B cell (primary cell): ENCODE measurements at regions of chr19 and their contacts with region 1.

Region 1: GRCh38 chr19:8580710-8581281 is 3.6 kb upstream of the MYO1F start:
- DNase-seq: peak; percentile 91
- ATAC-seq: peak; percentile 76
- H3K4me3 ChIP-seq: no peak overlapping the region
- H3K4me3 Mint-ChIP-seq: no peak overlapping the region
- H3K27ac ChIP-seq: no peak overlapping the region
- H3K27ac Mint-ChIP-seq: no peak overlapping the region
- H3K4me1 ChIP-seq: peaks cover 27 to 44% of the 10 kb centered on the region in 2 donors
- H3K4me1 Mint-ChIP-seq: peaks cover 29% of the 10 kb centered on the region
- H3K27me3 ChIP-seq: no peaks in the 10 kb centered on the region
- H3K27me3 Mint-ChIP-seq: no peaks in the 10 kb centered on the region
- CTCF ChIP-seq: peak; percentile 99

Region 2: DNA sequence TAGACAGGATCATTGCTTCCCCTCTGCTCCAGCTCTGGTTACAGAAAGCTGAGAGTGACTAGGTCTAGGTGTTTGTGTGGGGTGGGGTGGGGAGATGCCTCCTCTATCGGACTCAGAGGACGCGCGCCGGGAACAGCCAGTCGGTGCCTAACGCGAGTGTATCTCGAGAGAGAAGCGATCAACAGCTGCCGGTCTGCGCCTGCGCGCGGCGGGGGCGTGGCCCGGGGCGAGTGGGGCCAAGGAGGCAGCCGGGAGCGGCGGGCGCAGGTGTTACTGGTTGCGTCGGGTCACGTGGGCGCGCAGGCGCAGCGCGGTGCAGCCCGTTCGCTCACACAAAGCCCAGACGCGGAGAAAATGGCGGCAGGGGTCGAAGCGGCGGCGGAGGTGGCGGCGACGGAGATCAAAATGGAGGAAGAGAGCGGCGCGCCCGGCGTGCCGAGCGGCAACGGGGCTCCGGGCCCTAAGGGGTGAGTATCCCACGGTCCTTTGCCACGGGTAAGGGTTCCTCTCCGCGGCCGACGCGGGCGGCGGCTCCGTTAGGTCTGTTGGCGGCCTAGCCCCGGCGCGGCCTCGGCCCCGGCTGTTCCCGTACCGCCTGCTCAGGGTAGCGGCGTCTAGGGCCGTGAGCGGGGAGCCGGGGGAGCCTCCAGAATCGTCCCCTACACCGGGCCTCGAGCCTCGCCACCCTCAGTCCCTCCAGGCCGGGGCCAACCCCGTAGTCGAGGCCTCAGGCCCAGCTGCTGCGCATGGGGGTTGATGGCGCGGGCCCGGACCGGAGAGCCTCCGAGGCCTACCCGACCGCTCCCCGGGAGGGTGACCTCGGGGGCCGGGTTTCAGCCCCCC is 135.9 kb before region 1 on chr19 and contains the start of gene HNRNPM:
- CTCF ChIA-PET with region 1: interaction called, 10 read pairs
- POLR2A ChIA-PET with region 1: no interaction called
- intact Hi-C with region 1: no loop called
- DNase-seq: peak; percentile 99
- ATAC-seq: peak; percentile 92
- H3K4me3 ChIP-seq: peak within 1 kb of the TSS; percentile 65 to 97 (median 97)
- H3K4me3 Mint-ChIP-seq: peak within 1 kb of the TSS; percentile 94
- H3K27ac ChIP-seq: peak within 1 kb of the TSS; percentile 89 to 97
- H3K27ac Mint-ChIP-seq: peak within 1 kb of the TSS; percentile 98
- H3K4me1 ChIP-seq: peaks cover 38 to 47% of the 10 kb centered on the region in 2 donors
- H3K4me1 Mint-ChIP-seq: peaks cover 37% of the 10 kb centered on the region
- H3K27me3 ChIP-seq: no peaks in the 10 kb centered on the region
- H3K27me3 Mint-ChIP-seq: no peaks in the 10 kb centered on the region
- CTCF ChIP-seq: no peak
- total RNA-seq, gene HNRNPM: 207 and 221 TPM in 2 replicates

Region 3: DNA sequence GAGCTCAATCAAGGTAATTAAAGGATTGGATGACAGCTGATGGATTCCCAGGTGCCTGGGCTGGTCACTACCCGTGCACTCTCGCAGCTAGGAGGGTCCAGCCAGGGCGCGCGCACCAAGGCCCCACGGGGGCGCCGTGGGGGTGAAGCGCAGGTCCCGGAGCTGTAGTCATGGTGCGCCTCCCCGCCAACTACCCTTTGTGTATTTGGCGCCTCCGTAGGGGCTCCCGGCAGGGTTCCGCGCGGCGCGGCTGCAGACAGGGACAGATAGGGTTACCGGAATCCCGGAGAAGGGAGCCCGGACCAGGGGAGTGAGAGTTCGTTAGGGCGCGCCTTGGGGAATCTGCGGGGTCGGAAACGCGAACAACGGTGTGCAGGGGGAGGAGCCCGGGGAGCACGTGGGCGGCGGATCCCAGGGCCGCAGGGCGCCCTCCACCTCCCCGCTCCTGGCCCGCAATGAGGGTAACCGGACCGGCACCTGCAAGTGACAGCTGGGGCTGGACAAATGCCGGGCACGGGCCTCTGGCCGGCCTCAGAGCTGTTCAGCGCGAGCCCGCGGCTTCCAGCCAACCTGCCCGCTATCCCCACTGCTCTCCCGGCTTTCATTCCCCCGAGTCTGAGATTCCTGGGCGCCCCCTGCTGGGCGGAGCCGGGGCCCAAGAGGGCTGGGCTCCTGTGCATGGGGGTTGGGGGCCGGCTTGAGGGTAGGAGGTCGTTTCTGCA is 75.0 kb before region 1 on chr19:
- CTCF ChIA-PET with region 1: interaction called, 38 read pairs
- POLR2A ChIA-PET with region 1: interaction called, 3 read pairs
- intact Hi-C with region 1: no loop called
- DNase-seq: peak; percentile 82
- ATAC-seq: peak; percentile 78
- H3K4me3 ChIP-seq: peak overlapping the region in 4 of 5 experiments; percentile 64 to 72 (median 68)
- H3K4me3 Mint-ChIP-seq: peak overlapping the region; percentile 93
- H3K27ac ChIP-seq: no peak overlapping the region
- H3K27ac Mint-ChIP-seq: peak overlapping the region; percentile 68
- H3K4me1 ChIP-seq: peaks cover 0 to 24% of the 10 kb centered on the region in 2 donors
- H3K4me1 Mint-ChIP-seq: peaks cover 9% of the 10 kb centered on the region
- H3K27me3 ChIP-seq: peaks cover 0 to 10% (median 2%) of the 10 kb centered on the region in 4 experiments
- H3K27me3 Mint-ChIP-seq: no peaks in the 10 kb centered on the region
- CTCF ChIP-seq: peak; percentile 73

Region 4: GRCh38 chr19:8557642-8558238 is 23.1 kb before region 1 on chr19:
- CTCF ChIA-PET with region 1: interaction called, 95 read pairs
- POLR2A ChIA-PET with region 1: interaction called, 3 read pairs
- intact Hi-C with region 1: no loop called
- DNase-seq: no peak
- ATAC-seq: no peak
- H3K4me3 ChIP-seq: no peak overlapping the region
- H3K4me3 Mint-ChIP-seq: no peak overlapping the region
- H3K27ac ChIP-seq: no peak overlapping the region
- H3K27ac Mint-ChIP-seq: no peak overlapping the region
- H3K4me1 ChIP-seq: no peaks in the 10 kb centered on the region
- H3K4me1 Mint-ChIP-seq: no peaks in the 10 kb centered on the region
- H3K27me3 ChIP-seq: no peaks in the 10 kb centered on the region
- H3K27me3 Mint-ChIP-seq: no peaks in the 10 kb centered on the region
- CTCF ChIP-seq: no peak

Region 5: DNA sequence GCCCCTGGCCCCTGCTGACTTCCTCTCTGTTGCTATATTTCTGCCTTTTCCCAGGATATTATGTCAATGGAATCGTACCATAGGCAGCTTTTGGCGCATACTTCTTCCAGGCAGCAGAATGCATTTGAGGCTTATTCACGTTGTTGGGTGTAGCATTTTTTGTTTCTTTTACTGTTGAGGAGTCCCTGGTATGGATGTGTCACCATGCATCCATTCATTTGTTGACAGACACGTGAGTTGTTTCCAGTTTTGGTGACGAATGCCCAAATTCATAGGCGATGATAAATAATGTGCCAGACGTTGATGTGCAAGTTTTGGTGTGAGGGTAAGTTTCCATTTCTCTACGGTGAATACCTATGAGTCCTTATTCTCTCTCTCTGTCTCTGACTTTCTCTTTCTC is 54.6 kb after region 1 on chr19:
- CTCF ChIA-PET with region 1: no interaction called
- POLR2A ChIA-PET with region 1: no interaction called
- intact Hi-C with region 1: no loop called
- DNase-seq: no peak
- ATAC-seq: no peak
- H3K4me3 ChIP-seq: no peak overlapping the region
- H3K4me3 Mint-ChIP-seq: no peak overlapping the region
- H3K27ac ChIP-seq: no peak overlapping the region
- H3K27ac Mint-ChIP-seq: no peak overlapping the region
- H3K4me1 ChIP-seq: no peaks in the 10 kb centered on the region
- H3K4me1 Mint-ChIP-seq: no peaks in the 10 kb centered on the region
- H3K27me3 ChIP-seq: peaks cover 0 to 7% (median 0%) of the 10 kb centered on the region in 4 experiments
- H3K27me3 Mint-ChIP-seq: peaks cover 21% of the 10 kb centered on the region
- CTCF ChIP-seq: no peak

Region 6: DNA sequence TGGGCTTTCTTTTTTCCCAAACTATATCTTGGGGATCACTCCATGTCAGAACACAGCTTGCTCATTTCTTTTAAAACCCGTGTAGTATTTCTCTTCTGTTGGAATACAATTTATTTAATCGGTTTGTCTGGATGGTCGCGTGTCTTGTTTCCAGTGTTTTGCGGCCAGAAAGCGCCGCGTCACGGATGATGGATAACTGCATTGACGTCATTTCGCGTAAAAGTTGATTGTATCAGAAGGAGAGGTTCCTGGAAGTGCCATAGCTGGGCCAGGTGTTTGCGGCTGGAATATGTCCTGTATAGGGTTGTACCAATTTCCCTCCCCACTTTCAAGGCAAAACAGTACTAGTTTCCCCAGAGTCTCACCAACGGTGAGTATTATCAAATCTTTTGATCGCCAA is 108.1 kb after region 1 on chr19:
- CTCF ChIA-PET with region 1: interaction called, 24 read pairs
- POLR2A ChIA-PET with region 1: no interaction called
- intact Hi-C with region 1: loop called (anchors 5 kb)
- DNase-seq: no peak
- ATAC-seq: no peak
- H3K4me3 ChIP-seq: no peak overlapping the region
- H3K4me3 Mint-ChIP-seq: no peak overlapping the region
- H3K27ac ChIP-seq: no peak overlapping the region
- H3K27ac Mint-ChIP-seq: no peak overlapping the region
- H3K4me1 ChIP-seq: no peaks in the 10 kb centered on the region
- H3K4me1 Mint-ChIP-seq: no peaks in the 10 kb centered on the region
- H3K27me3 ChIP-seq: peaks cover 0 to 7% (median under 1%) of the 10 kb centered on the region in 4 experiments
- H3K27me3 Mint-ChIP-seq: peaks cover 33% of the 10 kb centered on the region
- CTCF ChIP-seq: no peak